Motor neuron (in vitro differentiated cells): ENCODE measurements at regions of chr10 and their contacts with region 1.

Region 1: DNA sequence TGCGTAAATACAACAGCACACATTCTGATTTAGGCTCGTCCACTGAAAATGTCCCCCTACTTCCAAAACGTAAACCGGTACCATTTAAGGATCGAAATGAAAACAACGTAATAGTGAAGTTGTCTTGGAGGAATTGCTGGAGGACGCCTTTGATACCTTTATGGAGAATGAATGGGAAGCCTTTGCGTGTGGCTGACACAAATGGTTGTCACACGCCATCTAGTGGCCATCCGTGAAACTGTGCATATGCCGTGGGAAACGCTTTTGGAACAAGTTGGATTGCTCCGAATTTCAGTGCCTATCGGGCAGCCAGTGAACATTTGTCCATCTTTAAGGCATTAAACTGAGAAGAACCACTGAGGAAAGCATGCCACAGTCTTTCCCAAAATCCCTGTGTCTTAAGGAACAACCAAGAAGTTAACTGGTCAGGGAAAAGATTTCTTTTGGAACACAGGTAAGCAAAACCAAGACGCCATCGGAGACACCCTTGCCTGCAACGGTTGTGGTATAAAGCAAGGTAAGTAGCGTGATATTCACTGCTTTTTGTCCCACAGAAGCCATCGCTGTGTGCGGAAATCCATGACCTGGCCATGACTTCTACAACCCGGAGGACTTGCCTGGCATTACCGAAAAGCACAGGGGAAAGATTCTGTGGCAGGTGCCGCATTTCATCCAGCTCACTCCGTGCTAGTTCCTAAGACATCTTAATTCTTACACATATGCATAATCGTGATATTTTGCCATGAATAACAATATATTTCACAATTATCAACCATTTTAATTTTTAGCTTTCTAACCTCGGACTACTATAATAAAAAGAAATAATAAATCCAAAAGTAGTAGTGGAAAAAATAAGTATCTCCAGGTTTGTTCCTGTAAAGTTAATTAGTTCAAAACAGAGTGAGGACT is 100.6 kb downstream of the FAM204A start:
- ATAC-seq: peak; percentile 49 to 89 (median 58)
- H3K4me3 ChIP-seq: no peak overlapping the region
- H3K27ac ChIP-seq: no peak overlapping the region
- H3K4me1 ChIP-seq: no peaks in the 10 kb centered on the region

Region 2: GRCh38 chr10:117216611-117217195 is 1024.8 kb before region 1 on chr10:
- in situ Hi-C with region 1: loop called in 1 of 9 experiments (anchors 25 kb)
- ATAC-seq: peak; percentile 72 to 89 (median 84)
- H3K4me3 ChIP-seq: peak overlapping the region; percentile 28 to 45 (median 33)
- H3K27ac ChIP-seq: no peak overlapping the region
- H3K4me1 ChIP-seq: peaks cover 4 to 5% of the 10 kb centered on the region in 2 donors

Region 3: DNA sequence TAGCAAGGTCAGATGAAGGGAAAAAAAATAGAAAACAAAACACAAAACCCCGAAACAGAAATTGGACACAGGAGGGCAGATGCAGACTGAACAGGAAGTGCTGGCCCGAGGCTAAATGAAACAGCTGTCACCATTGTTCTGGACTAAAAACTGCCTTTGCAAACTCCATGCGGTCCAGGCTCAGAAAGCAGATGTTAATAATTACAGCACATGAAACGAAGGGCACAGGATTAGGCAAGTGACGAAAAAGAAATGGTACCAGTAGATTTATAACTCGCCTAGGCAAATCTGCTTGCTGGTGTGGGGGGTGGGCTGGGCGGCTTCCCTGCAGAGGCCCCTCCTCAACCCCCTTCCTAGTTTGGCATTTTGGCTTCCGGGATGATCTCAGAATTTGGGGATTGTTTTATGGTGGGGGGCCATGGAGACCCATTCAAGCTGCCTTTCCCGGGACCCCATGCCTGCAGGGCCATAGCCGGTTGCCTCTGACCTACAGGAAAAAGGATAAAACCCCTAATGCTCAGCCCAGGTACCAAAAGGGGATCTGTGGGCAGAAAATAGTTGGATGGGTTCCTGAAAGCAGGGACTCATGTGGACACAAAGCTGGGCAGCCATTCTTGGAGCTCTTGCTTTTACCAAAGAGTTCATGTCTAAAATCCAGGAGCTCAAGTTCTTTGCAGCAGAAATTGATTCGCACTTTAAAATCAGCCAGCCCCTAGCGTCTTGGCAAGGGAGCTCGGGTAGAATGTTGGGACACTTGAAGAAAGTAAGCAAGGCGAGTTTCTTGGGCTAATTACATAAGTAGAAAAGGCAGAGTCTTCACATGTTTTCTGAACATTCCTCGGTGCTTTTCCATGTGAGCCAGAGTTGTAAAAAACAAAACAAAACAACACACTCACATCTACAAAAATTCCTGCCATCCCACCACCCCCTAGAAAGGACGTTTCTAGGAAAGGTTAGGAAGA is 738.0 kb before region 1 on chr10:
- in situ Hi-C with region 1: loop called in 1 of 9 experiments (anchors 25 kb)
- ATAC-seq: peak in 5 of 8 experiments; percentile 23 to 97 (median 96)
- H3K4me3 ChIP-seq: no peak overlapping the region
- H3K27ac ChIP-seq: no peak overlapping the region
- H3K4me1 ChIP-seq: peaks cover 7 to 25% of the 10 kb centered on the region in 2 donors

Region 4: DNA sequence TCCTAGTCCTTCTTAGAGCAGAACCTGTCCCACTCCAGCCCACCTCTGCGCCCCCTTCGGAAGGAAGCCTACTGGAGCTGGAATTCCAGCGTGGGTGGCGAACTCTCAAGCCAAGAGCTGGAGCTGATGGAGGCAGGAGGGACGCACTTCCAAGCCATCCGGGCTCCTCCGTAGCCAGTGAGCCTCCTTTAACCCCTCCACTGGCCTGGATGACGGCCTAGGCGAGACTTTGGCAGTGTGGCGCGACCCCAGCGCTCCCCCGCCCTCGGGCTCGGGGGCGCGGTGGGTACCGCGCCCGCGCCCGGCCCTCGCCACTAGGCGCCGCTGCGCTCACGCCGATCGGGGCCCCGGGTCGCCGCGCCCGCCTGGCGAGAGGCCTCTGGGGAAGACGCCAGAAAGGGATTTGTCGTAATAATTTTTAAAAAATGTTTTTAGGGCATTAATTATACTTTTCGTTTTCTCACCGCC is 704.0 kb before region 1 on chr10:
- in situ Hi-C with region 1: loop called in 7 of 9 experiments (anchors 25 kb)
- ATAC-seq: peak; percentile 16 to 84 (median 64)
- H3K4me3 ChIP-seq: no peak overlapping the region
- H3K27ac ChIP-seq: no peak overlapping the region
- H3K4me1 ChIP-seq: peaks cover 6 to 10% of the 10 kb centered on the region in 2 donors

Region 5: DNA sequence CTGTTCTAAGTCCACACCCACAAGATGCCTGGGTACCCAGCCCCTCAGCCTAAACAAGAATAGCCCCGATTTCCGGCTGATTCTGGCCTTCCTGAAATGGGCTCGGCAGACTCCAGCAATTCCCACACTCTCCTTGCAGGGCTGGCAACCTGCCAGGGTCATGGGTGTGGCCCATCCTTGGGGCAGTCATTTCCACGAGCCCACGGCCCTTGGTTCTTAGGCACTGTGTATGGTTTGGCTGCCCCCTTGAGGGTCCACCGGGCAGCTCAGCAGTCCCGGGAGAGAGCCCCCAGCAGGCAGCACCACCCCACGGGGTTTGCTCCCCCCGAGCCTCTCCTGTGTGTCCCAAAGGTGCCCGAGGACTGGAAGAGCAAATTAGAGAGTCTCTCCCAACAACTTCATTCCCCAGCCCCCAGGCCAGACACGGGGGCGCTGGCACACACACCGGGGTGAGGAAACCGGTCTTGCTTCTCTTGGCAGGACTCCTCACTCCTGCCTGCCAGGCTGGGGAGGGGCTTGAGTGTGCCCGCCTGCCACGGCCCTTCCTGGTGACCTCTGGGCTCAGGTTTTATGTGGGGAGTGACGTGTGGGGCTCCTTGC is 556.7 kb before region 1 on chr10:
- in situ Hi-C with region 1: loop called in 1 of 9 experiments (anchors 25 kb)
- ATAC-seq: peak in 4 of 8 experiments; percentile 12 to 97 (median 96)
- H3K4me3 ChIP-seq: no peak overlapping the region
- H3K27ac ChIP-seq: no peak overlapping the region
- H3K4me1 ChIP-seq: peaks cover under 1 to 3% of the 10 kb centered on the region in 2 donors

Region 6: DNA sequence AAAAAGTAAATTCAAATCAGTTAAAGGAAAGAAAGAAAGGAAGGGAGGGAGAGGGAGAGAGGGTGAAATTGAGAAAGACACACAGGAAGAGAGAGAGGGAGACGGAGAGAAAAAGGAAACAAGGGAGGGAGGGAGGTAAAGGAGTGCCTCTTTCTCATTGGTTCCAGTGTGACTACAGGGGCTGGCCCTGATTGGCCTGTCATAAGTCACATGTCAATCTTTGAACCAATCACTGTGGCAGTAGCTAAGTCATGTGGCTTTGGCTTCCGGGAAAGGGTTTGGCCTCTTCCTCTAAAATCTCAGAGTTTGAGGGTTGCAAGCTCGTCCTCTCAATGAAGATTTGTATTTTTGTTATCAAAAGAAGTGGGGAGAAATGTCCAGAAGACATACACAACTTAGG is 345.0 kb before region 1 on chr10:
- in situ Hi-C with region 1: loop called in 1 of 9 experiments (anchors 25 kb)
- ATAC-seq: no peak
- H3K4me3 ChIP-seq: no peak overlapping the region
- H3K27ac ChIP-seq: no peak overlapping the region
- H3K4me1 ChIP-seq: no peaks in the 10 kb centered on the region

Region 7: GRCh38 chr10:118057361-118057760 is 184.1 kb before region 1 on chr10:
- in situ Hi-C with region 1: loop called in 1 of 9 experiments (anchors 10 kb)
- ATAC-seq: peak in 3 of 8 experiments; percentile 78 to 96 (median 79)
- H3K4me3 ChIP-seq: no peak overlapping the region
- H3K27ac ChIP-seq: no peak overlapping the region
- H3K4me1 ChIP-seq: no peaks in the 10 kb centered on the region